Endothelial cell of umbilical vein (primary cell): ENCODE measurements at regions of chr13 and their contacts with region 1.

Region 1: DNA sequence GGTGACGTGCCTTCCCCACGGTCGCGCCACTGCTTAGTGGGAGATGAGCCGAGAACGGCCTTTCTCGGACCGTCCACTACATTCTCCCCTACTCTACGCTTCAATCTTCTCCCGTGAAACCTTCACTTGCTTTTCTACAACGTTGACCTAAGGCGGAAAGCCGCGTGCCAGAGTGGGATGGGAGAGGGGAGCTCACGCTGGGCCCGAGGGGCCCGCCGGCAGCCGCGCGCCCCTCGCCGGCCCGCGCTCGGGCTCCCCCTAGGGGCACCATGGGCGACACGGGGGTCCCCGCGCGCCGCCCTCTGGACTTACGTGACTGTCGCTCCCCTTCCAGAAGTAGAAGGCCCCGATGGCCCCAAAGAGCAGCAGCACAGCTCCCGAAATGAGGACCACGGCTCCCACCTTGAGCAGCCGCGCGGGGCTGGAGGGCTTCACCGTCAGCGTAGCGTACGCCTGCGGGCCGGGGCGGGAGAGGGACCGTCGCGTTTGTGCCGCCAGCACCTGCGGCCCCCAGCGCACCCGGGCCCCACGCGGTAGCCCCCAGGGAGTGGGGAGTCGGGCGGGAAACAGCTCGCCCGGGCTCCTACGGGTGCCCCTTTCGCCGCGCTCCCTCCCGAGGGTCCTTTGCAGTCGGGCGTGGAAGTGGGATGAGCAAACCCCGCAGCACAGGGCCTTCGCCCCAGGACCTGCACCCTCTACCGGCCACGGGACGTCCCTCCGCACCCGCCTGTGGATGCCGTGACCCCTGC is 727 bp downstream of the CNMD start:
- DNase-seq: peak; percentile 15
- H3K4me3 ChIP-seq: peak overlapping the region; percentile 17 to 24 (median 23)
- H3K27ac ChIP-seq: no peak overlapping the region
- H3K4me1 ChIP-seq: peaks cover 6% of the 10 kb centered on the region
- H3K27me3 ChIP-seq: peaks cover 28 to 56% of the 10 kb centered on the region in 2 experiments
- CTCF ChIP-seq: peak; percentile 61 to 63
- POLR2A ChIP-seq: no peak

Region 2: DNA sequence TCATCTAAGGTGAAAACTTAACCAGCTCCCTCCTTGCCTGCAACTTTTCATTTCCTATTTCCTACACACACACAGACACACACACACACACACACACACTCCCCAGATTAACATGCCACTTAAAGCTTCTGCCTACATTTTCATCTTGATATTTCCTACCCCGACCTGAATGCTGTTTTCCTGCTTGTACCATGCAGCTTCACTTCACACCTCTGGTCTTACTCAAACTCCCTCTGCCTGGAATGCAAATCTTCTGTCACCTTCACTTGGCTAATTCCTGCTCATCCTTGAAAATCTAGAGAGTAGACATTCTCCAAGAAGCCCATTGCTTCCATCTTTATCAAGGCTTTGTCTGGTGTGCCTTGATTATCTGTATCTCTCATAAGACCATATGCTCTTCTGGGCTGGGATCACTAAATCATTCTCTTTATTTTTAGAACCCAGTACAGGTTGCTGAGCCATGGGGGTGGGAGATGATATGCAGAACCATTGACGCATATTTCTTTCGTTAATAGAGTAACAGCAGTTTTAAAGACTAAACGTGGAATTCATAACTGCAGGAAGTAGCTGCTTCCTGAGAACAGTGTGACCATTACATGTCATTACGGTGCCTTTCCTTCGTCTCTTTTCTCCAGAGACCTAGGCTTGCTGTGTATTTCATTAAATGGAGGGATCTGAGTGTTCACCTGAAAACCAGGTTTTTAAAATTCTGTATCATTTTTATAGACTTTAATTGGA is 37.0 kb before region 1 on chr13:
- CTCF ChIA-PET with region 1: interaction called, 7 read pairs
- POLR2A ChIA-PET with region 1: no interaction called
- dilution Hi-C with region 1: no loop called
- intact Hi-C with region 1: loop called (anchors 5 kb)
- DNase-seq: peak; percentile 45
- H3K4me3 ChIP-seq: no peak overlapping the region
- H3K27ac ChIP-seq: peak overlapping the region; percentile 21
- H3K4me1 ChIP-seq: peaks cover 13% of the 10 kb centered on the region
- H3K27me3 ChIP-seq: no peaks in the 10 kb centered on the region
- CTCF ChIP-seq: no peak
- POLR2A ChIP-seq: no peak

Region 3: GRCh38 chr13:52713894-52714293 is 25.0 kb before region 1 on chr13:
- CTCF ChIA-PET with region 1: interaction called, 10 read pairs
- POLR2A ChIA-PET with region 1: no interaction called
- dilution Hi-C with region 1: no loop called
- intact Hi-C with region 1: no loop called
- DNase-seq: no peak
- H3K4me3 ChIP-seq: no peak overlapping the region
- H3K27ac ChIP-seq: no peak overlapping the region
- H3K4me1 ChIP-seq: no peaks in the 10 kb centered on the region
- H3K27me3 ChIP-seq: peaks cover 3% of the 10 kb centered on the region in 2 experiments
- CTCF ChIP-seq: no peak
- POLR2A ChIP-seq: no peak

Region 4: GRCh38 chr13:52725302-52725701 is 13.6 kb before region 1 on chr13:
- CTCF ChIA-PET with region 1: interaction called, 27 read pairs
- POLR2A ChIA-PET with region 1: no interaction called
- dilution Hi-C with region 1: no loop called
- intact Hi-C with region 1: no loop called
- DNase-seq: no peak
- H3K4me3 ChIP-seq: no peak overlapping the region
- H3K27ac ChIP-seq: no peak overlapping the region
- H3K4me1 ChIP-seq: no peaks in the 10 kb centered on the region
- H3K27me3 ChIP-seq: peaks cover 4 to 5% of the 10 kb centered on the region in 2 experiments
- CTCF ChIP-seq: no peak
- POLR2A ChIP-seq: no peak